ENCODE measurements at regions of chr18 and their contacts with region 1.

Region 1: DNA sequence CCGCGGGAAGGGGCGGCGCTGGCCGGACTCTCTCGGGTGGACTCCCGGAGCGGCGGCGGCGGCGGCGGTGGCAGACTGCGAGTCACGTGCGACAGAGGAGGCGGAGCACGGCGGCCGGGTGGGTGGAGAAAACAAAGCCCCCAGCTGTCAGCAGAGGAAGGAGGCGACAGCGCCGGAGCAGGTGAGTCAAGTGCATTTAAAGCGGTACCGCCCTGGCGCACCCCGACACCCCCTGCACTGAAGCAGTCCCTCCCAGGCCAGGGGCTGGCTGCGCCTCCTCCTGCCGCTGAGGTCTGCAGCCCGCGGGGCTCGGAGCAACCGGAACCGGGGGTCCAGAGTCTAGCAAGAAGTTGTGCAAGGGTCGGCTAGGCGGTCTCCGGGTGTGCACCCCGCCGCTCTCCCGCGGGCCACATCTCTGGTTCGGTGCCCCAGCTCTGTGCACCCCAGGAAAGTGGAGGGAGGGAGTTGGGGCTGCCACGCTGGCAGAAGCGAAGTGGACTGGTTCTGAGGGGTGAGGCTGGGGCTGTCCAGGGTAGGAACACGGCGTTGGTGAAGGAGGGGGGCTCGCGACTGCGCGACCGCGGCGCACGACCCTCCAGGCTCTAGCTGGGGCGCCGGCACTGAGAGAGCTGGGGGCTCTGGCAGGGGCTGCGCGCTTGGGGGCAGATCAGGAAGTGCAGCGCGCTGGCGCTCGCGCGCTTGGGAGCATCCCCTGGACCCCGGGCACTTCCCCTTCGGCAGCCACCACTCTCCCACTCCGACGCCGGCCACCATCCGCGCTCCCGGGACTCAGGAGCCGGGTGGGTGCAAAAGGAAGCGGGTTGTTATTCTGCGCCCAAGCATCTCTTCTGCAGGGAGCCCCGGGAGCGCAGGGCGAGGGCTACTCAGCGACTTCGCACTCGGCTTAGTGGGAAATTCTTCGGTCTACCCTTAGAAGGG is 64.0 kb upstream of the MAPRE2 start:
- DNase-seq: peak; percentile 79
- H3K4me3 Mint-ChIP-seq: peak overlapping the region; percentile 85
- H3K27ac Mint-ChIP-seq: no peak overlapping the region
- H3K4me1 Mint-ChIP-seq: peaks cover 23% of the 10 kb centered on the region
- H3K27me3 Mint-ChIP-seq: peaks cover 5% of the 10 kb centered on the region

Region 2: GRCh38 chr18:34857320-34857719 is 119.8 kb before region 1 on chr18:
- CTCF ChIA-PET with region 1: interaction called, 4 read pairs
- intact Hi-C with region 1: loop called (anchors 1 kb)
- DNase-seq: no peak
- H3K4me3 Mint-ChIP-seq: no peak overlapping the region
- H3K27ac Mint-ChIP-seq: no peak overlapping the region
- H3K4me1 Mint-ChIP-seq: peaks cover 32% of the 10 kb centered on the region
- H3K27me3 Mint-ChIP-seq: peaks cover 11% of the 10 kb centered on the region

Region 3: DNA sequence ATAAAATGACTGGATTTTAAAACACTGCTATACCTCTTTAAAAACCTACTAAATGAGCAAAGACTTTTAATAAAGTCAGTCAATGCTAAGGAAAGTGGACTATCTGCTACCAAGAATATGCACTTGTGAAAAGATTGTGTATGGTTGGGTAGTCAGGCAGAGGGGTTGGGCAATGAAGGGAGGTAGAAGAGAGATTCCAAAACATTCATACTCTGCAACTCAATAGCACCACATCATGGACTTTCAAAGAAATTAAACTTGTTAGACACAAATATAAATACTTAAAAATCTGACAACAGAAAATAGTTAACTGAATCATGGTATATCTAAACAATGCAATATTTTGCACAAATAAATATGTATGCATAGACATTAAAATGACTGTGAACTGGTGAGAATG is 75.9 kb before region 1 on chr18:
- CTCF ChIA-PET with region 1: no interaction called
- intact Hi-C with region 1: loop called (anchors 2 kb)
- DNase-seq: no peak
- H3K4me3 Mint-ChIP-seq: no peak overlapping the region
- H3K27ac Mint-ChIP-seq: no peak overlapping the region
- H3K4me1 Mint-ChIP-seq: peaks cover 9% of the 10 kb centered on the region
- H3K27me3 Mint-ChIP-seq: no peaks in the 10 kb centered on the region

Region 4: DNA sequence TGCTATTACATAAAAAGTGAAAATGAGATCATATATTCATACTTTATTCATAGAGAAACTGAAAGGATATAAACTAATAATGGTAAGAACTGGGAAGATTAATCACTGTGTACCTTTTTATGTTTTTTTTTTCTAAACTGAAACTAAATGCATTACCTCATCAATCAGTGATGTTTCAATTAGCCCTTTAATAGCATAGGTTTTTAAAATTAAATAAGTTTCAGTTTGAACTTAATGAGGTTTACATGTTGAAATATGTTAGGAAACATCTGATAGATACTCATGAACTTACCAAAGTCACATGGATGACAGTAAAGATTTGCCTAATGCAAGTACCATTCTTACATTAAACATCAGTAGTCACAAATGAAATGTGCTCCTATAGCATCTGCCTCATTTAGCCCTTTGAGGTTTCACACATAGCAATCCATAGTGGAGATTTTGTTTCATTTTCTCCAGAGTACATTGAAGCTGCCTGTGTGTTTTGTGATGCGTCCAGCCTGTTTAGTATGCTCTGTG is 72.9 kb after region 1 on chr18:
- CTCF ChIA-PET with region 1: no interaction called
- intact Hi-C with region 1: loop called (anchors 1 kb)
- DNase-seq: no peak
- H3K4me3 Mint-ChIP-seq: peak overlapping the region; percentile 62
- H3K27ac Mint-ChIP-seq: peak overlapping the region; percentile 81
- H3K4me1 Mint-ChIP-seq: peaks cover 79% of the 10 kb centered on the region
- H3K27me3 Mint-ChIP-seq: no peaks in the 10 kb centered on the region

Region 5: GRCh38 chr18:35158728-35159450 is 181.7 kb after region 1 on chr18:
- CTCF ChIA-PET with region 1: no interaction called
- intact Hi-C with region 1: loop called (anchors 1 kb)
- DNase-seq: peak; percentile 53
- H3K4me3 Mint-ChIP-seq: no peak overlapping the region
- H3K27ac Mint-ChIP-seq: peak overlapping the region; percentile 73
- H3K4me1 Mint-ChIP-seq: peaks cover 20% of the 10 kb centered on the region
- H3K27me3 Mint-ChIP-seq: no peaks in the 10 kb centered on the region

Region 6: DNA sequence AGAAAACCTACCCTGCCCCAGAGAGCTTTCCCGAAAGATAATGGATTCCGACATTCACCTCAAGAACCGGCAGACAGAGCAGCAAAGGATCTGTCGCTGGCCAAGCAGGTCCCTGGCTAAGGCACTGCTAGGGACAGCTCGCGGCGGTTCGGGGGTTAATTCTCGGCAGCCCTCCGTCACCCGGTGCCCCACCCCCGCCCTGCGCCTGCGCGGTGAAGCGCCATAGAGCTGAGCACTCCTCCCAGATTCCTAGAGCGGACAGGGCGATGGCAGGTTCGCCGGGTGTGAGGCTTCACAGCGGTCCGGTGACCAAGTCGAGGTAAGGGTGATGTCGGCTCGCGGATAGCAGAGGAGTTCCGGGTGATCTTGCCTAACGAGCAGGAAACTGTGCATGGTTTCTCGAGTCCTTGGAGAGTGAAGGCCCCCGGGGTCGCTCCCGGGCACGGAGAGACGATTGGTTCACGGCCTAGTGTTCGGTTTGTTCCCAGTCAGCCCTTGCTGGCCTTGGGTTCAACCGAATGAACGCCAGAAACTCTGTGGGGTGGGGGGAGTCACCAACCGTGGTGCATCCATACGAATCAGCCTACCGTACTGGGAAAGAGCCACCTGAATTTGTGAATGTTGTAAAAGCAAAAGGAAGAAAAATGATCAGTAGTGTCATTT is 313.0 kb after region 1 on chr18 and contains the start of gene ZSCAN30:
- CTCF ChIA-PET with region 1: no interaction called
- intact Hi-C with region 1: loop called (anchors 2 kb)
- DNase-seq: peak; percentile 96
- H3K4me3 Mint-ChIP-seq: peak within 1 kb of the TSS; percentile 96
- H3K27ac Mint-ChIP-seq: peak within 1 kb of the TSS; percentile 97
- H3K4me1 Mint-ChIP-seq: peaks cover 48% of the 10 kb centered on the region
- H3K27me3 Mint-ChIP-seq: peaks cover 2% of the 10 kb centered on the region
- total RNA-seq, gene ZSCAN30: 12.0 to 14.3 TPM

Measured in activated naive CD4-positive, alpha-beta T cell treated with anti-CD3 and anti-CD28 coated beads for 36 hours (primary cell).